Natural killer cell (primary cell): ENCODE measurements at regions of chr1 and their contacts with region 1.

Region 1: GRCh38 chr1:35641233-35641866 is at the start of gene PSMB2:
- DNase-seq: peak; percentile 97 to 98
- ATAC-seq: peak; percentile 94
- H3K4me3 ChIP-seq: peak within 1 kb of the TSS; percentile 92
- H3K4me3 Mint-ChIP-seq: peak within 1 kb of the TSS; percentile 100
- H3K27ac ChIP-seq: peak within 1 kb of the TSS; percentile 81
- H3K27ac Mint-ChIP-seq: peak within 1 kb of the TSS; percentile 99 to 100
- H3K4me1 ChIP-seq: peaks cover 12% of the 10 kb centered on the region
- H3K4me1 Mint-ChIP-seq: peaks cover 33 to 34% of the 10 kb centered on the region in 2 donors
- H3K27me3 ChIP-seq: peaks cover under 1% of the 10 kb centered on the region
- H3K27me3 Mint-ChIP-seq: peaks cover 12 to 25% of the 10 kb centered on the region in 2 donors
- CTCF ChIP-seq: no peak
- total RNA-seq, gene PSMB2: 37.0 to 45.0 (median 37.3) TPM

Region 2: GRCh38 chr1:35715568-35716002 is 74.2 kb after region 1 on chr1:
- intact Hi-C with region 1: loop called (anchors 1 kb)
- DNase-seq: peak; percentile 67 to 88
- ATAC-seq: peak; percentile 53 to 77 (median 58)
- H3K4me3 ChIP-seq: no peak overlapping the region
- H3K4me3 Mint-ChIP-seq: no peak overlapping the region
- H3K27ac ChIP-seq: no peak overlapping the region
- H3K27ac Mint-ChIP-seq: peak overlapping the region in 1 of 2 donors; percentile 52
- H3K4me1 ChIP-seq: peaks cover 27% of the 10 kb centered on the region
- H3K4me1 Mint-ChIP-seq: peaks cover 41 to 45% of the 10 kb centered on the region in 2 donors
- H3K27me3 ChIP-seq: no peaks in the 10 kb centered on the region
- H3K27me3 Mint-ChIP-seq: no peaks in the 10 kb centered on the region
- CTCF ChIP-seq: peak; percentile 85

Region 3: DNA sequence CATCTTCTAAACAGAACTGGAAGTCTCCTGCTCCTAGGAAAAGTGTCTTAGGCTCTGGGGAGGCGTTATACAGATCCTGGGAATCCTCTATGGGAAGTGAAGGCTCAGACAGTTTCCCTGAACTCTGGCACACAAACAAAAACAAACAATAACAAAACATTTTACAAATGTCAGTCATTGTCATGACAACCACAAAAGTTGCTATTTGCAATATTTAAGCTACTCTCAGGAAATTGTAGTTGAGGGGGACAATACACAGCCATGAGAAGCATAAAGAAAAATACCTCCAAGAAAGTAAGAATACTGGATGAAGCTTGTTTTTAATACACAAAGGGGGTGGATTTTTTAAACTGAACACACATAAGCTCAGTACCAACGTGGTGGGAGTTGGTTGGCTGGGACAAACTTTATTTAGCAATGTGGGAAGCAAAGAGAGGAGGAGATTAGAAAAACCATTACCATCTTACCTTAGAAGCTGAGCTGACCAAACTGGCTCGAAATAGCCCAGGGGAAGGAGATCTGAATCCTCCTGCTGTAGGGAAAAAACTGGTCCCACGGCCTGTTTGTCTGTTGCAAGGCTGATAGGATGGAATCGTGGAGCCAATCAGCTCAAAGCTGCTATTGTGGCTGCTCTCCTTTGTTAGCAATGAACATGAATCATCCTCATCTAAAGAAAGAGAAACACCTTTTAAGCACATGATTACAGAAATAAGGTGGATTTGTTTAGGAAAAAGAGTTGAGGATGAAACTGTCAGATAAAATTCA is 106.8 kb after region 1 on chr1:
- intact Hi-C with region 1: no loop called
- DNase-seq: no peak
- ATAC-seq: no peak
- H3K4me3 ChIP-seq: no peak overlapping the region
- H3K4me3 Mint-ChIP-seq: no peak overlapping the region
- H3K27ac ChIP-seq: no peak overlapping the region
- H3K27ac Mint-ChIP-seq: no peak overlapping the region
- H3K4me1 ChIP-seq: no peaks in the 10 kb centered on the region
- H3K4me1 Mint-ChIP-seq: no peaks in the 10 kb centered on the region
- H3K27me3 ChIP-seq: no peaks in the 10 kb centered on the region
- H3K27me3 Mint-ChIP-seq: no peaks in the 10 kb centered on the region
- CTCF ChIP-seq: no peak